ENCODE measurements at regions of chr6 and their contacts with region 1.

Region 1: GRCh38 chr6:24359640-24360454 is 2.0 kb upstream of the DCDC2 start:
- DNase-seq: peak; percentile 69
- ATAC-seq: peak; percentile 93
- H3K4me3 Mint-ChIP-seq: peak overlapping the region; percentile 77
- H3K27ac Mint-ChIP-seq: peak overlapping the region; percentile 79
- H3K4me1 Mint-ChIP-seq: peaks cover 20% of the 10 kb centered on the region
- H3K27me3 Mint-ChIP-seq: peaks cover 15% of the 10 kb centered on the region
- CTCF ChIP-seq: peak; percentile 62

Region 2: GRCh38 chr6:23964865-23965264 is 395.0 kb before region 1 on chr6:
- CTCF ChIA-PET with region 1: no interaction called
- POLR2A ChIA-PET with region 1: no interaction called
- intact Hi-C with region 1: no loop called
- DNase-seq: no peak
- ATAC-seq: no peak
- H3K4me3 Mint-ChIP-seq: no peak overlapping the region
- H3K27ac Mint-ChIP-seq: no peak overlapping the region
- H3K4me1 Mint-ChIP-seq: no peaks in the 10 kb centered on the region
- H3K27me3 Mint-ChIP-seq: no peaks in the 10 kb centered on the region
- CTCF ChIP-seq: no peak

Region 3: GRCh38 chr6:24283043-24283985 is 76.5 kb before region 1 on chr6:
- CTCF ChIA-PET with region 1: no interaction called
- POLR2A ChIA-PET with region 1: no interaction called
- intact Hi-C with region 1: loop called (anchors 5 kb)
- DNase-seq: no peak
- ATAC-seq: peak; percentile 40
- H3K4me3 Mint-ChIP-seq: no peak overlapping the region
- H3K27ac Mint-ChIP-seq: no peak overlapping the region
- H3K4me1 Mint-ChIP-seq: no peaks in the 10 kb centered on the region
- H3K27me3 Mint-ChIP-seq: peaks cover 6% of the 10 kb centered on the region
- CTCF ChIP-seq: no peak

Region 4: GRCh38 chr6:24296944-24297343 is 62.9 kb before region 1 on chr6:
- CTCF ChIA-PET with region 1: no interaction called
- POLR2A ChIA-PET with region 1: no interaction called
- intact Hi-C with region 1: no loop called
- DNase-seq: no peak
- ATAC-seq: no peak
- H3K4me3 Mint-ChIP-seq: no peak overlapping the region
- H3K27ac Mint-ChIP-seq: no peak overlapping the region
- H3K4me1 Mint-ChIP-seq: no peaks in the 10 kb centered on the region
- H3K27me3 Mint-ChIP-seq: peaks cover 28% of the 10 kb centered on the region
- CTCF ChIP-seq: no peak

Region 5: GRCh38 chr6:24402697-24403501 is 43.1 kb after region 1 on chr6 and contains the start of gene MRS2:
- CTCF ChIA-PET with region 1: no interaction called
- POLR2A ChIA-PET with region 1: no interaction called
- intact Hi-C with region 1: loop called (anchors 2 kb)
- DNase-seq: peak; percentile 75
- ATAC-seq: peak; percentile 96
- H3K4me3 Mint-ChIP-seq: peak within 1 kb of the TSS; percentile 96
- H3K27ac Mint-ChIP-seq: peak within 1 kb of the TSS; percentile 78
- H3K4me1 Mint-ChIP-seq: peaks cover 31% of the 10 kb centered on the region
- H3K27me3 Mint-ChIP-seq: peaks cover 8% of the 10 kb centered on the region
- CTCF ChIP-seq: no peak
- total RNA-seq, gene MRS2: 21.8 and 24.3 TPM in 2 replicates

Region 6: DNA sequence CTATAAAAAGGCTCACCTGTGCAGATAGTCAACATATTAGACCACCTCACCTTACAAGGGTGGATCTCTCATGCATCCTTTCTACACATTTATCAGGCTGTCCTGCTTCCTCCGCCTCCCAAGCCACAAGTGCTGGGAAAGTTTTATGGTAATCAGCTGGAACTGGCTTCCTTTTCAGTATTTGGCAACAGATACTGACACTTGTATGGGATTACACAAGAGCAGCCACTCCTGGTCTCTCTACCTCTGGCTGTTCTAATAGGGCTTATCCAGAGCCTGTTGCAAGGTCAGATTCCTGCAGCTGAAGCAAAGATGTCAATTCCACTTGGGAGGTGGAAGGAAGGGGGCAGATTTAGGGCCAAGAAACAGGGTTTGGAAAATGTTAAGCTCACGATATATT is 130.0 kb after region 1 on chr6:
- CTCF ChIA-PET with region 1: no interaction called
- POLR2A ChIA-PET with region 1: no interaction called
- intact Hi-C with region 1: no loop called
- DNase-seq: no peak
- ATAC-seq: no peak
- H3K4me3 Mint-ChIP-seq: no peak overlapping the region
- H3K27ac Mint-ChIP-seq: no peak overlapping the region
- H3K4me1 Mint-ChIP-seq: peaks cover 13% of the 10 kb centered on the region
- H3K27me3 Mint-ChIP-seq: no peaks in the 10 kb centered on the region
- CTCF ChIP-seq: no peak

Region 7: GRCh38 chr6:24643925-24644324 is 284.1 kb after region 1 on chr6:
- CTCF ChIA-PET with region 1: no interaction called
- POLR2A ChIA-PET with region 1: no interaction called
- intact Hi-C with region 1: no loop called
- DNase-seq: no peak
- ATAC-seq: no peak
- H3K4me3 Mint-ChIP-seq: no peak overlapping the region
- H3K27ac Mint-ChIP-seq: no peak overlapping the region
- H3K4me1 Mint-ChIP-seq: peaks cover 13% of the 10 kb centered on the region
- H3K27me3 Mint-ChIP-seq: peaks cover 2% of the 10 kb centered on the region
- CTCF ChIP-seq: no peak